K562 (cell line): ENCODE measurements at regions of chr16 and their contacts with region 1.

Region 1: DNA sequence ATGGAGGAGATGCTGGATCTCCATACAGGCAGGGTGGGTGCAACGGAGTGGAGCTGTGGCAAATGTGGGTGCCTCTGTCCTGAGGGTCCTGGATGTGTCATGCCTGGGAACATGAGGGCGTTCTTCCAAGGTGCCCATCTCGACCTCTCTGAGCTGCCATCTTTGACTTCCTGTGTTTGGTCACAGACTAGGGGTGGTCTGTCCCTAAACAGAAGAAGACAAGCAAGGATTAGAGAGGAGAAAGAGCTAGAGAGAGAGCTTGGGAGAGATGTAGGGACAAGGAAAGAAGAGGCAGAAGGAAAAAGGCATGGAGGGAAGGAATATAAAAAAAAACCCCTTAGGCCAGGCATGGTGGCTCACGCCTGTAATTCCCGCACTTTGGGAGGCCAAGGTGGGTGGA is 3.3 kb upstream of the ZG16 start:
- DNase-seq: no peak
- ATAC-seq: no peak
- H3K4me3 ChIP-seq: no peak overlapping the region
- H3K27ac ChIP-seq: no peak overlapping the region
- H3K4me1 ChIP-seq: peaks cover 0 to 2% of the 10 kb centered on the region in 2 experiments; a peak in 2 of 5 replicates
- H3K27me3 ChIP-seq: peaks cover 13 to 21% of the 10 kb centered on the region in 2 experiments; a peak in 4 of 5 replicates
- CTCF ChIP-seq: no peak
- EP300 ChIP-seq: no peak
- POLR2A ChIP-seq: no peak
- RAD21 ChIP-seq: no peak

Region 2: GRCh38 chr16:29784901-29785500 is 10.3 kb after region 1 on chr16:
- CTCF ChIA-PET with region 1: no interaction called
- POLR2A ChIA-PET with region 1: interaction called, 10 read pairs
- in situ Hi-C with region 1: no loop called
- intact Hi-C with region 1: no loop called
- DNase-seq: peak; percentile 75 to 86 (median 78)
- ATAC-seq: peak; percentile 98
- H3K4me3 ChIP-seq: no peak overlapping the region
- H3K27ac ChIP-seq: no peak overlapping the region
- H3K4me1 ChIP-seq: peaks cover 8 to 12% of the 10 kb centered on the region in 2 experiments; a peak in 4 of 5 replicates
- H3K27me3 ChIP-seq: peaks cover 10% of the 10 kb centered on the region in 2 experiments
- CTCF ChIP-seq: peak; percentile 80 to 91 (median 88)
- EP300 ChIP-seq: no peak
- POLR2A ChIP-seq: no peak
- RAD21 ChIP-seq: peak in 1 of 2 experiments; percentile 49; a peak in 2 of 4 replicates